Heart left ventricle (tissue), 16 donors: ENCODE measurements at regions of chr4 and their contacts with region 1.

Region 1: DNA sequence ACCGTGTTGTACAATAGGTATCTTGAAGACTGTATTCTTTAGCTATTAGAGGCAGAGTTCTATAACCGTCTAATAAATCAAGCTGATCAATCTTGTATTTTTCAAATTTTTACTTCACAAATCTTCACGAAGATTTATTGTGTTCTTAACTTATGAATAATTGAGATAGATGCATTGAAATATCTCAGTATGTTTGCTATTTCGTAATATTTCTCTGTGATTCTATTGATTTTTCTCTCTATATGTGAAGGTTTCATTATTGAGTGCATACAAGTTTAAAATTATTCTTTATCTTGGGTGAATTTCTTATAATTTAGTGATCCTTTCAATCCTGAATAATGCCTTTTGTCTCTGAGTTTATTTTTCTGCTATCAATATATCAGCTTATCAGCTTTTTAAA is 19.8 kb upstream of the SHISA3 start:
- DNase-seq: no peak
- ATAC-seq: no peak
- H3K4me3 ChIP-seq: no peak overlapping the region
- H3K27ac ChIP-seq: no peak overlapping the region
- H3K4me1 ChIP-seq: no peaks in the 10 kb centered on the region
- H3K27me3 ChIP-seq: peaks cover 0 to 6% (median 0%) of the 10 kb centered on the region in 9 donors
- CTCF ChIP-seq: no peak
- POLR2A ChIP-seq: no peak

Region 2: GRCh38 chr4:42296196-42296595 is 81.3 kb before region 1 on chr4:
- intact Hi-C with region 1: no loop called
- DNase-seq: no peak
- ATAC-seq: no peak
- H3K4me3 ChIP-seq: no peak overlapping the region
- H3K27ac ChIP-seq: no peak overlapping the region
- H3K4me1 ChIP-seq: no peaks in the 10 kb centered on the region
- H3K27me3 ChIP-seq: peaks cover 0 to 4% (median 0%) of the 10 kb centered on the region in 9 donors
- CTCF ChIP-seq: no peak
- POLR2A ChIP-seq: no peak

Region 3: DNA sequence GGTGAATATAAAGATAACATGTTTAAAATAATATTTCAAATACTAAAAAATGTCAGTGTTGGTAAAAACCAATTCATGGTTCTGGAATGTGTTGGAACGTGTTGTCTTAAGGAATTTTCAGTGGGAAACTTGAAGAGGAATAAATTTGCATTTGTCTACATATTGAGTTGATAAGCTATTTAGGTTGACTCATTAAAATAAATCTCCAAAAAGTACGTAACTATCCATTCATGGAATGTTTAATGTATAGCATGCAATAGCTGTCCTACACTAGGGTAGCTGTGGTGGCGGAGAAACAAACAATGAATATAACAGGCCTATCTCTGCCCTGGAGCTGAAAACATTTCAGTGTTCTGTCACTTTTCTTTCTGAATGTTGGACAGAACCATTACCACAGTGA is 40.1 kb after region 1 on chr4:
- intact Hi-C with region 1: loop called in 1 of 10 experiments (anchors 5 kb)
- DNase-seq: no peak
- ATAC-seq: no peak
- H3K4me3 ChIP-seq: no peak overlapping the region
- H3K27ac ChIP-seq: no peak overlapping the region
- H3K4me1 ChIP-seq: peaks cover 0 to 7% (median 2%) of the 10 kb centered on the region in 12 donors
- H3K27me3 ChIP-seq: no peaks in the 10 kb centered on the region
- CTCF ChIP-seq: no peak
- POLR2A ChIP-seq: no peak

Region 4: DNA sequence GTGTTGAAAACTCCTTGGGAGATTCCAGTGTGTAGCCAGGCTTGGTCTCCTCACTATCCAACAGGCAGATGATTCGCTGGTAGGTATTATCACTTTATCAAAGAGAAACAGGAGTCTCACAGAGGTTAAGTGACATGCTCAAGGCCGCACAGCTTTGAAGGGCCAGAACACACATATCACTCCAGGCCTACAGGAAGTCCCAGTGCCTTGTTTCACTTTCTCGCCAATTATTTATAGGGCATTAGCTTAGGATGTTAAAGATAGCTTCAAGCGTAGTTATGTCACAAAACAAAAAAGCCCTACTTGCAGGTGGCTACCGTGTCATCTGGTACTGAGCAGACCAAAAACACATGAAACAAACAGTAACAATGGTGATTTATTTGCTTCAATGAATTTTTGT is 266.2 kb after region 1 on chr4:
- intact Hi-C with region 1: no loop called
- DNase-seq: peak in 1 of 5 donors; percentile 35
- ATAC-seq: peak; percentile 57 to 84 (median 82)
- H3K4me3 ChIP-seq: no peak overlapping the region
- H3K27ac ChIP-seq: peak overlapping the region in 6 of 12 donors; percentile 17 to 53 (median 35)
- H3K4me1 ChIP-seq: peaks cover 0 to 43% (median 12%) of the 10 kb centered on the region in 12 donors
- H3K27me3 ChIP-seq: no peaks in the 10 kb centered on the region
- CTCF ChIP-seq: no peak
- POLR2A ChIP-seq: no peak